Ovary (tissue), 10 donors: ENCODE measurements at regions of chr1 and their contacts with region 1.

Region 1: DNA sequence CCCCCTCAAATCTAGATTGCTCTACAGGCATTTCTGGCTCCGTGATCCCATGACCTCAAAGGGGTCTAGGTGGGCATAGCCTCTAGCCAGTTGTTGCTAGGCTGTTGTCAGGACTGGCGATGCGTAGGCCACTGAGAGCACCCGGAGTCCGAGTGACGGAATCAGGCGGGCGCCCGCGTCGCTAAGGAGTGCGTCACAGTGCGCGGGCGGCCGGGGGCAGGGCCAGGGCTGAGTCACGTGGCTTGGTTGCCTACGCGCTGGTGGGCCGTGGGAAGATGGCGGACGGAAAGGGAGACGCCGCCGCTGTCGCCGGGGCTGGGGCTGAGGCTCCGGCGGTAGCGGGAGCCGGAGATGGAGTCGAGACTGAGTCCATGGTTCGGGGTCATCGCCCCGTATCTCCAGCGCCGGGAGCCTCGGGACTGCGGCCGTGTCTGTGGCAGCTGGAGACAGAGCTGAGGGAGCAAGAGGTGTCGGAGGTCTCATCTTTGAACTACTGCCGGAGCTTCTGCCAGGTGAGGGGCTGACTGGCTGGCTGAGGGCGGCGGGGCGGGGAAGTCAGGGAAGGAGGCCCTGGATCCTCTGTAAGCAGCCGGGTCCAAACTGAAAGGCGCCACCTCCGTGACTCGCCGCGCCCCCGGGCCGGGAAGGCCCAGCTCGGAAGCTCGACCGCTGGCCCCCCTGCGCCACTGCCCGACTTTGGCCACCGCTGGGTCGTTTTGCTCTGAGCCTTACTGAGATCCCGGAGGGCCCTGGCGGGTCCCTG is at the start of gene RLF:
- DNase-seq: peak; percentile 93 to 97 (median 96)
- H3K4me3 ChIP-seq: peak within 1 kb of the TSS; percentile 96
- H3K27ac ChIP-seq: peak within 1 kb of the TSS; percentile 65 to 89
- H3K4me1 ChIP-seq: peaks cover 5% of the 10 kb centered on the region
- H3K27me3 ChIP-seq: no peaks in the 10 kb centered on the region
- CTCF ChIP-seq: peak in 1 of 3 donors; percentile 35
- EP300 ChIP-seq: peak; percentile 56
- POLR2A ChIP-seq: peak; percentile 96
- total RNA-seq, gene RLF: 16.5 to 29.3 (median 19.1) TPM

Region 2: GRCh38 chr1:40676501-40676900 is 515.2 kb after region 1 on chr1:
- intact Hi-C with region 1: loop called in 1 of 4 experiments (anchors 10 kb)
- DNase-seq: no peak
- H3K4me3 ChIP-seq: no peak overlapping the region
- H3K27ac ChIP-seq: no peak overlapping the region
- H3K4me1 ChIP-seq: no peaks in the 10 kb centered on the region
- H3K27me3 ChIP-seq: no peaks in the 10 kb centered on the region
- CTCF ChIP-seq: no peak
- EP300 ChIP-seq: no peak
- POLR2A ChIP-seq: no peak